Posterior vena cava (tissue), 2 donors: ENCODE measurements at regions of chr16 and their contacts with region 1.

Region 1: GRCh38 chr16:16861546-16861945 is 482.6 kb downstream of the NPIPA7 start:
- DNase-seq: no peak

Region 2: DNA sequence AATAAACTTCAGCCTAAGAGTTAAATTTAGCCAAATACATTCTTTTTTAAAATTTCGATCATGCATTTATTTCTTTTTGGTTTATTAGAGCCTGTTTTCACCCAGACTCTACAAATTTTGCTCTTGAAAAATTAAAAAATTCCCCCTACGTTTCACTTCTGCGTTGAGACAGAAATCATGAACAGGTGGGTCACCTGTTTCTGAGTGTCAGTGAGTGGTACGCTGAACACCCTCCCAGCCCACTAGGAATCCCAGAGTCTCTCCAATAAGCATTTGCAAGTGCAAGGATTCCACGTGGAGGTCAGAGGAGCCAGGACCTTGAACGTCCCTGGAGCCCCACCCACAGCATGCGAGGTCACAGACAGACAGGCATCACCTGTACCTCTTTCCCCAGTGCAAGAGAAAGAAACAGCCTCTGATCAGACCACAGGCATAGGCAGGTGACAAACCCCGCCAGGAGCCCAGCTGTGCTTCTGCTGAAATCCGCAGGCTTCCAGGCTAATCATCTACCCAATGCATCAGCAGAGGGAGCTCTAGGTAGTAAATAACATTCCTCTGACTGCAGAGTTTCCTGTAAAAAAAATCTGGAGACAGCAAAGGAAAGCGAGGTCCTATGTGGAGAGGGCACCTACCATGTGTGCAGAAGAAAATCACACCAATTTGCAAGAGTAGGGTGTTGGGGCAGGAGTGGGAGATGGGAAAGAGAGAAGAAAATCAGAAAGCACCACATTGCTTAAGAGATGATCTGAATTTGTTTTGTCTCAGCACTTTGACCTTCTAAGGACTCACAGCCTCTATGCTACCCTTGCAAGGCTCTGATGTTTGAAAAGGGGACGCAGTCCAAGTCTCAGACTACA is 615.1 kb after region 1 on chr16:
- intact Hi-C with region 1: loop called in 1 of 2 experiments (anchors 10 kb)
- DNase-seq: peak; percentile 48